ENCODE measurements at regions of chr1 and their contacts with region 1.

Region 1: GRCh38 chr1:178031856-178032320 is 62.0 kb upstream of the RASAL2 start:
- DNase-seq: peak; percentile 73 to 95
- ATAC-seq: peak; percentile 42 to 96 (median 88)
- H3K4me3 ChIP-seq: no peak overlapping the region
- H3K27ac ChIP-seq: peak overlapping the region in 2 of 10 donors; percentile 14 to 16
- H3K4me1 ChIP-seq: peaks cover 2 to 41% (median 33%) of the 10 kb centered on the region in 9 donors
- H3K27me3 ChIP-seq: no peaks in the 10 kb centered on the region
- CTCF ChIP-seq: peak; percentile 81 to 93 (median 89)

Region 2: DNA sequence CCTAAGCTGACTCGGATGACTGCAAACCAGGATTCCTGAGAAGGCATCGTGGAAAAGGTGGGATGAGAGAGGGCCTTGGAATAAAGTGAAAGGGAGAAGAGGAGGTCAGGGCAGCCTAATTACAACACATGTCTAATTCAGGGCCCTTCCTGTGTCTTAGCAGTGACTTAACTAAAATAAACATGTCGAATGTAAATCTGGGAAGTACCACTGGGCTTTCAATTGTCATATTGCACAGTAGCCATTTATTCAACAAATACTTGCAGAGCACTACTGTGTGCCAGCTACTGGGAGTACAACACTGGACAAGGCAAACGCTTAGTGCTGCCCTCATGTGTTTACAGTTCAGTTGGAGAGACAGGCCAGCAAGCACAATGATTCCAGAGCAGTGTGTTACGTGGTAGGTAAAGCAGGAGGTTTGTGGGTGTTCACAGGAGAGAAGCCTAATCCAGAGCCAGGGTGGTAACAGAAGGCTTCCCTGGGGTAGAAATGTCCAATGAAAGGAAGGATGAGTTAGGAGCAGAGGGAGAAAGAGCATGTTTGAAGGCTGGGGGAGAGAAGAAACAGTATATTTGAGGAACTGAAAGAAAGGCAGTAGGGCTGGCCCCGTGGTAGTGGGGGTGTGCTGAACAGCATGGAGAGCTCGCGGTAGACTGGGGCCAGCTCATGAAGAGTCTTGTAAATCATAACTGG is 24.0 kb after region 1 on chr1:
- intact Hi-C with region 1: loop called in 1 of 10 experiments (anchors 2 kb)
- DNase-seq: peak in 1 of 2 donors; percentile 38
- ATAC-seq: peak in 6 of 8 donors; percentile 43 to 64 (median 48)
- H3K4me3 ChIP-seq: no peak overlapping the region
- H3K27ac ChIP-seq: peak overlapping the region; percentile 72 to 95 (median 82)
- H3K4me1 ChIP-seq: peaks cover 31 to 97% (median 90%) of the 10 kb centered on the region in 9 donors
- H3K27me3 ChIP-seq: no peaks in the 10 kb centered on the region
- CTCF ChIP-seq: peak in 7 of 9 donors; percentile 4 to 53 (median 26)

Region 3: DNA sequence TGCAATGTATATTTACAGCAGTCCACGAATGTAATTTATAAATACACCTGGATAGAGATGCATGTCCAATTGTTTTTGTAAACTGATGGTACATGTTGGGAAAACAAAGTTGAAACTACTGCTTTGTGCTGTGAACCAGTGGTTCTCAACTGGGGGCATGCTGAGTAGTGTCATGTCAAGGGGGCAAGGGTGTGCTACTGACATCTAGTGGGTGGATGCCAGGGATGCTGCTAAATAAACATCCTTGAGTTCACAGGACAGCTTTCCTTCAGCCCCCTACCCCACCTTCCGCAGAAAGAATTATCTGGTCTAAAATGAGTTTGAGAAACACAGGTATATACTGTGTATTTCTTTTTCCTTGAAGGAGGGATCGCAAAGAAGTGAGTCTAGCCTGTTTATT is 157.9 kb after region 1 on chr1:
- intact Hi-C with region 1: loop called in 5 of 10 experiments (anchors 1 to 5 kb)
- DNase-seq: peak in 1 of 2 donors; percentile 46
- ATAC-seq: peak in 6 of 8 donors; percentile 71 to 81 (median 78)
- H3K4me3 ChIP-seq: no peak overlapping the region
- H3K27ac ChIP-seq: no peak overlapping the region
- H3K4me1 ChIP-seq: peaks cover 0 to 71% (median 20%) of the 10 kb centered on the region in 9 donors
- H3K27me3 ChIP-seq: no peaks in the 10 kb centered on the region
- CTCF ChIP-seq: peak; percentile 27 to 74 (median 63)

Region 4: DNA sequence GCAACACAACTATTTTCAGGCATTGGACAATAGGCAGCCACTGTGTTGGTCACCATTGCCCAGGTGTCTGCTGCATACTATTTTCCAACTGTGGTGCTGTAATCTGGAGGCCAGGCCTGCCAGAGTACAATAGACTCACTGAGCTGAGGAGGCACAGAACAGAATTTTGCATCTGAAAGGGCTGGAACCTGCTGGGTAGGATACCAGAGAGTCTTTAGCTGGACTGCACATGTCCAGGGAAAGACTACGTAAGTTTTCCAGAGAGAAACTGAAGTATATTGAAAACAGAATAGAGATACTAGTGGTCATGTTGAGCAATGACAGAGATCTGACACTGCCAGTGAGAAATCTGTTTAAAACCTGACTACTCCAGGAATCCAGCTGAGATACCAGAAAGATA is 262.8 kb after region 1 on chr1:
- intact Hi-C with region 1: loop called in 4 of 10 experiments (anchors 5 to 10 kb)
- DNase-seq: no peak
- ATAC-seq: peak in 3 of 8 donors; percentile 19 to 40 (median 26)
- H3K4me3 ChIP-seq: no peak overlapping the region
- H3K27ac ChIP-seq: no peak overlapping the region
- H3K4me1 ChIP-seq: peaks cover 0 to 29% (median 4%) of the 10 kb centered on the region in 9 donors
- H3K27me3 ChIP-seq: no peaks in the 10 kb centered on the region
- CTCF ChIP-seq: no peak